OCI-LY7 (cell line): ENCODE measurements at regions of chr9 and their contacts with region 1.

Region 1: DNA sequence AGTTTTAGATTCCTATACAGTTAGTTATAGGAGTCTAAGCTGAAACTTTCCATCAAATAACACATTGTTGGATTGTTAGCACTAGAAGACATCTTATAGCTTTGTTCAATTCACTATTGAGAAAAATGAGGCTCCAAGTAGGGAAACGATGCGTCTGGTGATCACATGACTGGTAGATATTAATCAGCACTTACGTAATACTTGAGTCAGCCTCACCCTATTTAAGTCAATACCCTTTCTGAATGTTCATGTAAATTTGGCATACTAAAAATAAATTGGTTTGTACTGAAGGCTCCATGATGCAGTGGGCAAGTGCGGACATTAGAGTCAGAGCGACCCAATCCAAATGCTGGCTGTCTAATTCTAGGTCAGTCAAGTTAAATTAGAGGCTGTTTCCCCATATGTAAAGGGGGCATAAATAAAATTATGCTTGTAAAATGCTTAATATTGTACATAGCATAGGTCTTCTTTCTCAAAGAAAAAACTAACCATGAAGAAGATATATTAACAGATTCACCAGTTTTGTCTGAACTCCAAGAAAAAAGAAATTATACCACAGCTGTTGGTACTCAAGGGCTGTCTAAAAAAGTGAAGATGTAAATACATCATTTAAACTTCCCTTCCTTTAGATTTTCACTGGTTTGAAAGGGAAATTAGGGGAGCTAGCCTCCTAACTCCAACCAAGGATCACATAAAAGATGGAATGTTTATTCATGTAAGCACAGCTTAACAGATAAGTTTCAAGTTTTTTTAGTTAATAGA is 406.6 kb upstream of the TLE4 start:
- DNase-seq: no peak
- H3K4me3 ChIP-seq: no peak overlapping the region
- H3K27ac ChIP-seq: no peak overlapping the region
- H3K4me1 ChIP-seq: no peaks in the 10 kb centered on the region
- CTCF ChIP-seq: no peak

Region 2: GRCh38 chr9:78351816-78352215 is 813.4 kb before region 1 on chr9:
- CTCF ChIA-PET with region 1: no interaction called
- POLR2A ChIA-PET with region 1: no interaction called
- intact Hi-C with region 1: no loop called
- DNase-seq: no peak
- H3K4me3 ChIP-seq: no peak overlapping the region
- H3K27ac ChIP-seq: no peak overlapping the region
- H3K4me1 ChIP-seq: no peaks in the 10 kb centered on the region
- CTCF ChIP-seq: no peak

Region 3: DNA sequence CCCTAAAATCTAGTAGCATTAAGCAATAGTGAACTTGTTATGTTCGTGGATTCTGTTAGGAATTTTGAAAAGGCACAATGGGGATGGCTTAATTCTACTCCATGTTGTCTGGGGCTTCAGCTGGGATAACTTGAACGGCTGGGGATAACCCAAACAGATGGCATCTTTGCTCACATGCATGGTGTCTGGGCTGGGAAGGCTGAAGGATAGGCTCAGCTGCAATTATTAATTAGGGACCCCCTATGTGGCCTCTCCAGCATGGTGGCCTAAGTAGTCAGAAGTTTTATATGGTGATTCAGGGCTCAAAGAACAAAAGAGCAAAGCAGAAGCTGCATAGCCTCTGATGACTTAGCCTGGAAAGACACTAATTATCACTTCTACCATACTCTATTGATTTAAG is 317.1 kb before region 1 on chr9:
- CTCF ChIA-PET with region 1: no interaction called
- POLR2A ChIA-PET with region 1: no interaction called
- intact Hi-C with region 1: no loop called
- DNase-seq: no peak
- H3K4me3 ChIP-seq: no peak overlapping the region
- H3K27ac ChIP-seq: no peak overlapping the region
- H3K4me1 ChIP-seq: no peaks in the 10 kb centered on the region
- CTCF ChIP-seq: no peak

Region 4: DNA sequence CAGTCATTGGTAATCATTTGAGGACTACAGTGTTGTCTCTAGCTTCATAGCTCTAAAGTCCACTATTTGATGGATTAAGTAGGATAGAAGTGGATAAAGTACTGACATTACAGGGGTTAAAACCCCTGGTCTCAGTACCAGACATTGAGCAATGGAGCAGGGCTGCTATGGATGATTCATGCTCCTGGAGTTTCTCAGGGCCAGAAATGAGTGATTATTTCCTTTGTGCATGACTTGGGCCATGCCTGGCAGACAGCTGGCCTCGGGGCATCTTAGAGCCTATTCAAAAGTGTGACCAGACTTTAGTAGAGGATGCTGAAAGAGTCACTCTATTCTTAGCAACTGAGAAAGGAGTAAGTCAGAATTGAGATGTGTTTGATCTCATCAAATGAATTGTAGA is 55.9 kb after region 1 on chr9:
- CTCF ChIA-PET with region 1: no interaction called
- POLR2A ChIA-PET with region 1: no interaction called
- intact Hi-C with region 1: loop called (anchors 10 kb)
- DNase-seq: no peak
- H3K4me3 ChIP-seq: no peak overlapping the region
- H3K27ac ChIP-seq: no peak overlapping the region
- H3K4me1 ChIP-seq: no peaks in the 10 kb centered on the region
- CTCF ChIP-seq: no peak

Region 5: GRCh38 chr9:79242489-79242888 is 77.3 kb after region 1 on chr9:
- CTCF ChIA-PET with region 1: no interaction called
- POLR2A ChIA-PET with region 1: no interaction called
- intact Hi-C with region 1: no loop called
- DNase-seq: no peak
- H3K4me3 ChIP-seq: no peak overlapping the region
- H3K27ac ChIP-seq: no peak overlapping the region
- H3K4me1 ChIP-seq: no peaks in the 10 kb centered on the region
- CTCF ChIP-seq: no peak